ENCODE measurements at regions of chr7 and their contacts with region 1.

Region 1: GRCh38 chr7:120996333-120996987 is 7.9 kb downstream of the CPED1 start:
- DNase-seq: peak in 2 of 4 experiments; percentile 64 to 90
- ATAC-seq: peak; percentile 13
- H3K4me3 ChIP-seq: no peak overlapping the region; the same call in 1 of the 2 replicates
- H3K27ac ChIP-seq: peak overlapping the region; percentile 30
- H3K4me1 ChIP-seq: peaks cover 15 to 44% of the 10 kb centered on the region in 2 experiments
- H3K27me3 ChIP-seq: no peaks in the 10 kb centered on the region
- CTCF ChIP-seq: 0 out of 6 replicates have a peak, but pooled peaks of 1 of the 3 experiments have one; percentile 0
- EP300 ChIP-seq: no peak
- POLR2A ChIP-seq: no peak
- RAD21 ChIP-seq: no peak

Region 2: DNA sequence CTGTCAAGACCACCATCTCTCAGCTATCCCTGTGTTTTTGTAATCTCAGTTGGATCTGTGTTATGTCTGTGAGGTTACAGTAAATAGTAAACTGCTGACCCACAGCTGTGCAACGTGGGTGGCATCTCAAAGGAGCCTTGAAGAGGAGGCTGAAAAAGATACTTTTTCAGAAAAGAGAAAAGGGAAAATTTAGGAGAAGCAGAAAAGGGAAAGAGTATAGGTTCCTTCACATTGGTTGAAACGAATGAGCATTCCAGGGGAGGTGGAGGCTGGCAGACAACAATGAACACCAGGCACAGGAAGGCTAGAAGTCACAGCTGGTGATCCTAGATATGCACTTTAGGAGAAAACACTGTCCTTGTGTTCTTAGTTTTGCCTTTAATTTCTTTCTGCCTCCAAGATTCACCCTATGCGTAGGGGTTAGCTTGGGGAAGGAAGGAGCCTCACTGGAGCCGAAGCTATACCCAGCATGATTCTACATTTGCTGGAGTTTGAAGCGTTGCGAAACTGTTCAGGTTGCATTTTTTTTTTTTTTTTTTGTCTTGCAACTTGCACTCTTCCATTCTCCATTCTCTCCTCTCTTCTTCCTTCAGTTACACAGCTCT is 10.4 kb after region 1 on chr7:
- CTCF ChIA-PET with region 1: interaction called, 3 read pairs
- POLR2A ChIA-PET with region 1: interaction called, 56 read pairs
- in situ Hi-C with region 1: no loop called
- intact Hi-C with region 1: no loop called
- DNase-seq: peak in 2 of 4 experiments; percentile 69 to 78
- ATAC-seq: peak; percentile 73
- H3K4me3 ChIP-seq: peak overlapping the region; percentile 1; the same call in 1 of the 2 replicates
- H3K27ac ChIP-seq: peak overlapping the region; percentile 62
- H3K4me1 ChIP-seq: peaks cover 16 to 57% of the 10 kb centered on the region in 2 experiments
- H3K27me3 ChIP-seq: no peaks in the 10 kb centered on the region
- CTCF ChIP-seq: no peak
- EP300 ChIP-seq: peak; percentile 60
- POLR2A ChIP-seq: no peak
- RAD21 ChIP-seq: no peak

Region 3: GRCh38 chr7:121027761-121028669 is 31.6 kb after region 1 on chr7:
- CTCF ChIA-PET with region 1: no interaction called
- POLR2A ChIA-PET with region 1: no interaction called
- in situ Hi-C with region 1: no loop called
- intact Hi-C with region 1: no loop called
- DNase-seq: no peak
- ATAC-seq: no peak
- H3K4me3 ChIP-seq: no peak overlapping the region
- H3K27ac ChIP-seq: peak overlapping the region; percentile 45; the same call in 2 of the 3 replicates
- H3K4me1 ChIP-seq: peaks cover 3 to 63% of the 10 kb centered on the region in 2 experiments; a peak in 4 of 5 replicates
- H3K27me3 ChIP-seq: no peaks in the 10 kb centered on the region
- CTCF ChIP-seq: no peak
- EP300 ChIP-seq: no peak
- POLR2A ChIP-seq: 0 out of 2 replicates have a peak, but pooled peaks have one; percentile 20
- RAD21 ChIP-seq: no peak

Measured in K562 (cell line).